Heart right ventricle (tissue), 16 donors: ENCODE measurements at regions of chr10 and their contacts with region 1.

Region 1: DNA sequence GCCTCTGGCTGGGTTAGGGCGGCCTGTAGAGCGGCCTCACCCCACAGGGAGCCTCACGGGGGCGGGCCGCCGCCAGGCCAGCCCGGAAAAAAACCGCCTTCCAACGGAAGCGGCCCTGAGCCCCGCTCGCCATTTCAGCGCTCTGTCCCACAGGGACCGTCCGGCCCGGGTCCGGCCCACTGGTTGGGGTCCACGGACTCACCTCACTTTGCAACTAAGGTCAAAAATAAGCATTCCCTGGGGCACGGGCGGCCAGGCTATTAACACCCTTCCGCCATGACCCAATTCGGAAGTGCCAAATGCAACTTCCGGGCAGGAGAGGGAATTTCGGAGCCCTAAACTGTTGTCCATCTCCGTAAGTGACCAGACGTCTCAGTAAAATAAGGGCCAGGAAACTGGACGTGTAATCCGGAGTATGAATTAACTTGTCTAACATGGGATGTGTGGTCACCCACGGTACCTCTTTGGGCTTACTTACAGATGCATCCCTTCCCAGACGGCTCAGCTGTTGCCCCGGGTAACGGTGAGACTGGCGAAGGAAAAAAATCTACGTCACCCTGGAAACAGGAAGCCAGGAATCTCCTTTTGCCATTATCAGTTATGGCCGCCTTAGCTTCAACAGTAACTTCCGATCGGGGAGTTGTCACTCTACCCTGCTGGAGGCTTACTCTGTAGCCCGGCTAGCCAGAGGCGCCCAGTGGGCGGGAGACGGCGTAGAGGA is at the start of gene BBIP1:
- DNase-seq: no peak
- ATAC-seq: peak; percentile 95 to 98 (median 96)
- H3K4me3 ChIP-seq: peak within 1 kb of the TSS; percentile 59 to 79 (median 70)
- H3K27ac ChIP-seq: peak within 1 kb of the TSS; percentile 93 to 99 (median 97)
- H3K4me1 ChIP-seq: peaks cover 7 to 54% (median 40%) of the 10 kb centered on the region in 9 donors
- H3K27me3 ChIP-seq: no peaks in the 10 kb centered on the region
- CTCF ChIP-seq: peak in 2 of 9 donors; percentile 1 to 27
- total RNA-seq, gene BBIP1: 16.6 to 30.7 (median 23.8) TPM

Region 2: DNA sequence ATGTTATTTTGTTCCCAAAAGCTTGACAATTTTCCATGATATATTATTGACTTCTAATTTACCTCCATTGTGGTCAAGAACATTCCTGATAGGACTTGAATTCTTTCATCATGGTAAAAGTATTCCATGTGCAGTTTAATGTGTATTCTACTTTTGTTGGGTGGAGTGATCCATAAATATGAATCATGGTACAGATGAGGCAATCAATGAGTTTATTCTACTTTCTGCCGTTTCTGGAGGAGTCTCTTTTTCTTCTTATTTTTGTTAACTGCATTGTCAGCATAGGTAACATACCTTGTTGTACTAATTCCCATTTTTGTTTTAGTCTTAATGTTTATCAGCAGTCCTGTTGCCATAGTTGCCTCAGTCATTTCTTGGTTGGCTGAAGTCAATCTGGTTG is 70.2 kb after region 1 on chr10:
- intact Hi-C with region 1: loop called in 1 of 10 experiments (anchors 10 kb)
- DNase-seq: no peak
- ATAC-seq: no peak
- H3K4me3 ChIP-seq: no peak overlapping the region
- H3K27ac ChIP-seq: no peak overlapping the region
- H3K4me1 ChIP-seq: peaks cover 0 to 43% (median 36%) of the 10 kb centered on the region in 9 donors
- H3K27me3 ChIP-seq: no peaks in the 10 kb centered on the region
- CTCF ChIP-seq: no peak

Region 3: DNA sequence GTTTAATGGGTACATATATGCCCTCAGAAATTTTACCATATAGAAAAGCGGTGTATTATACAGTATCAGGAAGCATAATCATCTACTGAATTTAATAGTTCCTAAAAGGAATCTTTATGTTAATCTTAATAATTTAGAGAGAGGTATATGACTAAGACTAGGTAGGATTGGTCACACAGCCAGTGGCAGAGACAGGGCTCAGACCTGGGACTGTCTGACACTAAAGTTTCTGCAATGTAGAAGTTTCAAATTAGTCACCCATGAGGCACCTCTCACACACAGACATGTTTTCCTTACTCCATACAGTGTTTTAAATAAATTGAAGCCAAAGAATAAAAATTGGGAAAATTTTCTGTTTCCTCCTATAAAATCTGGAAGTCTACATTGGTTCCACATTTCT is 85.2 kb after region 1 on chr10:
- intact Hi-C with region 1: loop called in 1 of 10 experiments (anchors 5 kb)
- DNase-seq: no peak
- ATAC-seq: no peak
- H3K4me3 ChIP-seq: no peak overlapping the region
- H3K27ac ChIP-seq: no peak overlapping the region
- H3K4me1 ChIP-seq: no peaks in the 10 kb centered on the region
- H3K27me3 ChIP-seq: no peaks in the 10 kb centered on the region
- CTCF ChIP-seq: no peak